Activated CD4-positive, alpha-beta T cell treated with anti-CD3 and anti-CD28 coated beads for 36 hours (primary cell): ENCODE measurements at regions of chr5 and their contacts with region 1.

Region 1: GRCh38 chr5:123610665-123611405 is 98.9 kb downstream of the CSNK1G3 start:
- DNase-seq: peak; percentile 14
- ATAC-seq: peak; percentile 39
- H3K4me3 Mint-ChIP-seq: no peak overlapping the region
- H3K27ac Mint-ChIP-seq: no peak overlapping the region
- H3K4me1 Mint-ChIP-seq: peaks cover 11% of the 10 kb centered on the region
- H3K27me3 Mint-ChIP-seq: no peaks in the 10 kb centered on the region

Region 2: DNA sequence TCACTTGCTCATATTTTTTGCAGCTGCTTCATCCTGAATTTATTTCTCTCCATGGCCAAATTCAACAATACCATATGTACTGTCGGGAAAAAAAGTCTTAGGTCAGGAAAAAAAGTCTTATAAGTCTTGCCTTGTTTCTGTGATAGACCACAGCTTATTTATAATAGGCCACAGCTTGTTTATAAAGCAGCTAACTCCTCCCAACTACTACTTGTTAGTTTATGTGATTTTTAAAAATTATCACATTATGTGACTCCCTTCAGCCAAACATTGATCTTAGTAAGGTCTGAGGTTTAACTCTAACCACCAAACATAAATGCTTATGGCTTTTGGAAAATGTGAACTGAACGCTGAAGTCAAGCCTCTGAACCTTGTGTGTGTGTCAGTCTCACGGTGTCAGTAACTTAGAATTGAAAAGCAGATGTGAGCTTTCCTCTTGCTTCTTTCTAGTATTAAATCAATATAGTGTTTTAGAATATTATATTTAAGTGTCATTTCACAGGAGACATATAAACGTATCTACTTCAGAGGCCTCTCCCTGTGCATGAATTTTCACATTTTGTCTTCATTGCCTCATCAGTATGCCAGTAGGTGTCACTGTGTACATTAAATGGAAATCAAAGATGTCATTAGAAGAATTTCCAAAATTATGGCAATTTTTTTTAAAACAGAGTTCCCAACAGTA is 714.1 kb before region 1 on chr5:
- CTCF ChIA-PET with region 1: no interaction called
- POLR2A ChIA-PET with region 1: no interaction called
- intact Hi-C with region 1: loop called in 1 of 2 experiments (anchors 2 kb)
- DNase-seq: no peak
- ATAC-seq: no peak
- H3K4me3 Mint-ChIP-seq: no peak overlapping the region
- H3K27ac Mint-ChIP-seq: no peak overlapping the region
- H3K4me1 Mint-ChIP-seq: peaks cover under 1% of the 10 kb centered on the region
- H3K27me3 Mint-ChIP-seq: no peaks in the 10 kb centered on the region

Region 3: DNA sequence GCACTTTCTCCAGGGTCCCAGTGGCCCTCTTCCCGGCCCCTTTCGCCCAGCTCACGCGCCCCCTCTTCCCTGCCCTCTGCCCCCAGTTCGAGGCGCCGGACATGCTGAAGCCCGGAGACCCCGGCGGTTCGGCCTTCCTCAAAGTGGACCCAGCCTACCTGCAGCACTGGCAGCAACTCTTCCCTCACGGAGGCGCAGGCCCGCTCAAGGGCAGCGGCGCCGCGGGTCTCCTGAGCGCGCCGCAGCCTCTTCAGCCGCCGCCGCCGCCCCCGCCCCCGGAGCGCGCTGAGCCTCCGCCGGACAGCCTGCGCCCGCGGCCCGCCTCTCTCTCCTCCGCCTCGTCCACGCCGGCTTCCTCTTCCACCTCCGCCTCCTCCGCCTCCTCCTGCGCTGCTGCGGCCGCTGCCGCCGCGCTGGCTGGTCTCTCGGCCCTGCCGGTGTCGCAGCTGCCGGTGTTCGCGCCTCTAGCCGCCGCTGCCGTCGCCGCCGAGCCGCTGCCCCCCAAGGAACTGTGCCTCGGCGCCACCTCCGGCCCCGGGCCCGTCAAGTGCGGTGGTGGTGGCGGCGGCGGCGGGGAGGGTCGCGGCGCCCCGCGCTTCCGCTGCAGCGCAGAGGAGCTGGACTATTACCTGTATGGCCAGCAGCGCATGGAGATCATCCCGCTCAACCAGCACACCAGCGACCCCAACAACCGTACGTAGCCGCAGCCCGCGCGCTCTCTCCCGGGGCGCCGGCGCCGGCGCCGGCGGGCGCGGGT is 520.7 kb before region 1 on chr5:
- CTCF ChIA-PET with region 1: no interaction called
- POLR2A ChIA-PET with region 1: no interaction called
- intact Hi-C with region 1: loop called in 1 of 2 experiments (anchors 5 kb)
- DNase-seq: no peak
- ATAC-seq: no peak
- H3K4me3 Mint-ChIP-seq: no peak overlapping the region
- H3K27ac Mint-ChIP-seq: no peak overlapping the region
- H3K4me1 Mint-ChIP-seq: peaks cover 23% of the 10 kb centered on the region
- H3K27me3 Mint-ChIP-seq: peaks cover 70% of the 10 kb centered on the region

Region 4: DNA sequence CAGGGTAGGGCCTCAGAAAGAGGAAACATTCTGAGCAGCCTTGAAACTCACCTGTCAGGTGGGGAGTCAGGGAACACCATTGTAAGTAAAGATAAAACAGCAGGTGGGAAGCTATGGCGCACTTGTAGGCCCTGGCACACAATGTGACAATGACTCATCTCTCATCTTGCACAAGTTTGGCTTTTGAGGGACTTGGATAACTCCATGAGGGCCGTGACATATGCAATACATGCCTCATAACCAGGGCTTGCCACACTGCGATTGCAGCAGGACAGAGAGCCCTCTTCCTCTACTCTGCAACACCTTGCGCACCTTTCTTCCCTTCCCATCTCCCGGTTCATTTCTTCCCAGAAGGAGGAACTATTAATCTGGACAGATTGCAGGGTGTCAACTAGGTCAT is 332.6 kb before region 1 on chr5:
- CTCF ChIA-PET with region 1: no interaction called
- POLR2A ChIA-PET with region 1: no interaction called
- intact Hi-C with region 1: loop called in 1 of 2 experiments (anchors 5 kb)
- DNase-seq: no peak
- ATAC-seq: no peak
- H3K4me3 Mint-ChIP-seq: no peak overlapping the region
- H3K27ac Mint-ChIP-seq: no peak overlapping the region
- H3K4me1 Mint-ChIP-seq: no peaks in the 10 kb centered on the region
- H3K27me3 Mint-ChIP-seq: peaks cover 3% of the 10 kb centered on the region

Region 5: GRCh38 chr5:123371575-123372179 is 239.2 kb before region 1 on chr5:
- CTCF ChIA-PET with region 1: interaction called, 9 read pairs
- POLR2A ChIA-PET with region 1: no interaction called
- intact Hi-C with region 1: loop called (anchors 5 kb)
- DNase-seq: peak; percentile 50
- ATAC-seq: no peak
- H3K4me3 Mint-ChIP-seq: no peak overlapping the region
- H3K27ac Mint-ChIP-seq: no peak overlapping the region
- H3K4me1 Mint-ChIP-seq: peaks cover 2% of the 10 kb centered on the region
- H3K27me3 Mint-ChIP-seq: no peaks in the 10 kb centered on the region

Region 6: DNA sequence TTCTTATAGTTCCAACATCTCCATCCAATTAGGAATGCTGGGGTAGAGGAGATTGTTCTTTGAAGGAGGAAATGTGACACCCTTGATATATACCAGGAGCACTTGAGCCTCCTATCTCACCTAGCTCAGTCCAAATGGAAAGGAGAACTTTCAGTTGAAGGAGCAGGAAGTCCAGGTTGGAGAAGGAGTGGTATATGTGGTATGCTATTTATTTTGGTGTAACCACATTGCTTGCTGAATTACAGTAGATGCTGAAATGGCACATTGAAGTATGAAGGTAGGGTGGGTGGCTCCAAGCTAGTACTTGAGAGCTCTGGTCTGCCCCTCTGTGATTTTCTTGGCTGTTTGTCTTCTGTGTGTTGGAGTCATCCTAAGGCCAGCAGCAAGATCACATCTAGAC is 92.7 kb before region 1 on chr5:
- CTCF ChIA-PET with region 1: interaction called, 3 read pairs
- POLR2A ChIA-PET with region 1: no interaction called
- intact Hi-C with region 1: loop called (anchors 1 to 5 kb)
- DNase-seq: no peak
- ATAC-seq: no peak
- H3K4me3 Mint-ChIP-seq: no peak overlapping the region
- H3K27ac Mint-ChIP-seq: no peak overlapping the region
- H3K4me1 Mint-ChIP-seq: peaks cover 61% of the 10 kb centered on the region
- H3K27me3 Mint-ChIP-seq: no peaks in the 10 kb centered on the region

Region 7: GRCh38 chr5:123582550-123583285 is 28.1 kb before region 1 on chr5:
- CTCF ChIA-PET with region 1: interaction called, 10 read pairs
- POLR2A ChIA-PET with region 1: no interaction called
- intact Hi-C with region 1: no loop called
- DNase-seq: no peak
- ATAC-seq: no peak
- H3K4me3 Mint-ChIP-seq: no peak overlapping the region
- H3K27ac Mint-ChIP-seq: no peak overlapping the region
- H3K4me1 Mint-ChIP-seq: no peaks in the 10 kb centered on the region
- H3K27me3 Mint-ChIP-seq: no peaks in the 10 kb centered on the region

Region 8: DNA sequence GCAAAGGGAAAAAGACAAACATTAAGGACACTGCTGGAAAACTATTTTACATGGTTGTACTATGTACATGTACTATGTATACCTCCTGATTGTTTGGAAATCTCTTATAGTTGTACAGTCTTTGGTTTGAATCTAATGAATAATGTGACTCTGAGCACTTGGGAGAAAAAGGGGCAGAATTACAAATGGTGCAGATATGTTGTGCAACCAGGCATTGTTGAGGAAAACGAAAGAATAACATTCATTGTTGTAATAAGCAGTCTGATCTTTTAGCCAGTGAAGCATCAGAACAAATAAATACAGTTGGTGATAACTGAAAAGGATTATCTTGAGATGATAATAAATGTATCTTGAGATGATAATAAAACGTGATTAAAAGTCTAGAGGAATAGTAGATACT is 11.7 kb before region 1 on chr5:
- CTCF ChIA-PET with region 1: no interaction called
- POLR2A ChIA-PET with region 1: no interaction called
- intact Hi-C with region 1: no loop called
- DNase-seq: no peak
- ATAC-seq: no peak
- H3K4me3 Mint-ChIP-seq: no peak overlapping the region
- H3K27ac Mint-ChIP-seq: no peak overlapping the region
- H3K4me1 Mint-ChIP-seq: peaks cover 4% of the 10 kb centered on the region
- H3K27me3 Mint-ChIP-seq: no peaks in the 10 kb centered on the region

Region 9: GRCh38 chr5:123844873-123845272 is 234.0 kb after region 1 on chr5:
- CTCF ChIA-PET with region 1: no interaction called
- POLR2A ChIA-PET with region 1: no interaction called
- intact Hi-C with region 1: no loop called
- DNase-seq: no peak
- ATAC-seq: no peak
- H3K4me3 Mint-ChIP-seq: no peak overlapping the region
- H3K27ac Mint-ChIP-seq: no peak overlapping the region
- H3K4me1 Mint-ChIP-seq: no peaks in the 10 kb centered on the region
- H3K27me3 Mint-ChIP-seq: no peaks in the 10 kb centered on the region